ENCODE measurements at regions of chr13 and their contacts with region 1.

Region 1: GRCh38 chr13:38686577-38687245 is at the start of gene FREM2:
- DNase-seq: peak; percentile 33
- H3K4me3 ChIP-seq: peak within 1 kb of the TSS; percentile 13 to 55 (median 40)
- H3K27ac ChIP-seq: peak within 1 kb of the TSS in 2 of 4 donors; percentile 20 to 49
- H3K4me1 ChIP-seq: peaks cover 4 to 25% (median 13%) of the 10 kb centered on the region in 4 donors
- H3K27me3 ChIP-seq: peaks cover 43% of the 10 kb centered on the region
- CTCF ChIP-seq: no peak
- EP300 ChIP-seq: no peak
- POLR2A ChIP-seq: no peak
- total RNA-seq, gene FREM2: 0.40 to 2.2 (median 1.2) TPM

Region 2: GRCh38 chr13:38767528-38768265 is 81.0 kb after region 1 on chr13:
- in situ Hi-C with region 1: no loop called
- intact Hi-C with region 1: loop called (anchors 5 kb)
- DNase-seq: no peak
- H3K4me3 ChIP-seq: no peak overlapping the region
- H3K27ac ChIP-seq: no peak overlapping the region
- H3K4me1 ChIP-seq: no peaks in the 10 kb centered on the region
- H3K27me3 ChIP-seq: no peaks in the 10 kb centered on the region
- CTCF ChIP-seq: no peak
- EP300 ChIP-seq: no peak
- POLR2A ChIP-seq: no peak

Region 3: DNA sequence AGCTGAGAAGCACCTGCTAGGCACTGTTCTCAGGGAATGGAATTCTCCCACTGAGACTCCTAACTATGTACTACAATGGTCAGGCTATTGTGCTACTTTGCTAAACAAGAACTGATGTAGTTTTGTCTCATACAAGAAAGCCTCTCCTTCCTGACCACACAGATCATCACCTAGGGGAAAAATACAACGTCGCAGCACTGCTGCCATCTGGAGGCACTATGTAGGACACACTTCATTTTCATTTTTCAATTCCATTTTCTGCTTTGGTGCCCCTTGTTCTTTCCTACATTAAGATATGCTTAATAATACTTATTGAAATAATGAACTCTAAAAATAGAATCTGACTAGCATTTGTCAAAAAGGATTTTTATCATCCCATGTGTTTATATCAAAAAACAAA is 330.1 kb after region 1 on chr13:
- in situ Hi-C with region 1: no loop called
- intact Hi-C with region 1: no loop called
- DNase-seq: peak; percentile 17
- H3K4me3 ChIP-seq: no peak overlapping the region
- H3K27ac ChIP-seq: peak overlapping the region in 1 of 4 donors; percentile 3
- H3K4me1 ChIP-seq: peaks cover 0 to 15% (median 2%) of the 10 kb centered on the region in 4 donors
- H3K27me3 ChIP-seq: no peaks in the 10 kb centered on the region
- CTCF ChIP-seq: peak; percentile 34 to 50 (median 40)
- EP300 ChIP-seq: no peak
- POLR2A ChIP-seq: no peak

Measured in transverse colon (tissue), 4 donors.